ENCODE measurements at regions of chr16 and their contacts with region 1.

Region 1: GRCh38 chr16:4548124-4548523 is 8.0 kb upstream of the C16orf96 start:
- DNase-seq: peak in 1 of 10 donors; percentile 44

Region 2: GRCh38 chr16:4506450-4506849 is 41.7 kb before region 1 on chr16:
- intact Hi-C with region 1: loop called (anchors 1 kb)
- DNase-seq: peak in 6 of 10 donors; percentile 64 to 94 (median 70)

Region 3: DNA sequence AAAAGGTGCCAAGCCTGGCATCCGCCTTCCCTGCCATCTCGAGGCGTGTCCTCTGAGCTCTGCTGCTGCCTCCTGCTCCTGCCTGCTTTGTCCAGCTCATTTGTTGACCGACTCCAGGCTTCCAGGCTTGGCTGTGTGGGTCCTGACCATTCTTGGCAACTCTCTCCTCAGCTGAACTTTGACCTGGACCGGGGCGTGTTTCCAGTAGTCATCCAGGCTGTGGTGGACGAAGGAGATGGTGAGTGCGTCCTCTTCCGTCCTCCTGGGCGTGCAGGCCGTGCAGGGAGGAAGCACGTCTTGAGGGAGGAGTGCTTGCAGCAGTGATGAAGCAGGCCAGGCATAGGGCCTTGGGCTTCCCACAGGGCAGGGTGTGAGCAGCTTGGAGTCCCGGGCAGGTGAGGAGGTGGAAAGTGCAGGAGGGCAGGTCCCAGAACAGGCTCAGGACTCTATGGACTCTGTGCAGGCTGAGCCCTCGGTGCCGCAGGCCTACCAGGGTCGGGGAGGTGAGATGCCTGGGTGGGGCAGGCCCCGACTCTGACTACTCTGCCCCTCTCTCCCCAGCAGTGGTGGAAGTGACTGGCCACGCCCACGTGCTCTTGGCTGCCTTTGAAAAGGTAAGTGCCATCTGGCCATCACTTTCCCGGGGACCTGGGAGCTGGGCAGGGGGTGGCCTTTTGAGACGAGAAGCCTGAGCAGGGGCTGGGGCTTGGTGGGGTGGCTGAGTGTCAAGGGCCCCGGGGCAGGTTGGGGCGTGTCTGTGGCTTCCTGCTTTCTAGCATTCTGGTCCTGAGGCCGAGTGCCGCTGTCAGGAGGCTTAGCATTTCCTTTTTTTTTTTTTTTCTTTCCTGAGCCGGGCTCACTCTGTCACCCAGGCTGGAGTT is 116.7 kb after region 1 on chr16:
- intact Hi-C with region 1: no loop called
- DNase-seq: peak in 1 of 10 donors; percentile 81

Region 4: GRCh38 chr16:5235119-5235518 is 687.0 kb after region 1 on chr16:
- intact Hi-C with region 1: no loop called
- DNase-seq: no peak